ENCODE measurements at regions of chr1 and their contacts with region 1.

Region 1: GRCh38 chr1:204323887-204324286 is 35.8 kb downstream of the PLEKHA6 start:
- DNase-seq: no peak
- H3K4me3 ChIP-seq: no peak overlapping the region
- H3K27ac ChIP-seq: no peak overlapping the region
- H3K4me1 ChIP-seq: peaks cover 5% of the 10 kb centered on the region
- H3K27me3 ChIP-seq: no peaks in the 10 kb centered on the region
- CTCF ChIP-seq: no peak
- POLR2A ChIP-seq: no peak

Region 2: DNA sequence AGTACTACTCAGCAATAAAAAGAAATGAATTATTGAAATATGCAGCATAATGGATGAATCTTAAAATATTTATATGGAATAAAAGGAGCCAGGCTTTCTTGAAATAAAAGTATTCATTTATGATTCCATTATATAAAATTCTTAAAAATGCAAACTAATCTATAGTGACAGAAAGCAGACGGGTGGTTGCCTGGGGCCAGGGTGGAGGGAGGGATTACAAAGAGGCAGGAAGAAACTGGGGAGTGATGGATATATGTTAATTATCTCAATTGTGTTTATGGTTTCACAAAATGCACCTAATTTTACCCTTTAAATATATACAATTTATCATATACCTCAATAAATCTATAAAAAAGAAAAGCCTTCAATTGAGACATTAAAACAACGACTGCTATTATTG is 32.3 kb before region 1 on chr1:
- CTCF ChIA-PET with region 1: no interaction called
- POLR2A ChIA-PET with region 1: no interaction called
- dilution Hi-C with region 1: no loop called
- intact Hi-C with region 1: loop called (anchors 1 kb)
- DNase-seq: no peak
- H3K4me3 ChIP-seq: no peak overlapping the region
- H3K27ac ChIP-seq: no peak overlapping the region
- H3K4me1 ChIP-seq: peaks cover 5% of the 10 kb centered on the region
- H3K27me3 ChIP-seq: no peaks in the 10 kb centered on the region
- CTCF ChIP-seq: no peak
- POLR2A ChIP-seq: no peak

Region 3: DNA sequence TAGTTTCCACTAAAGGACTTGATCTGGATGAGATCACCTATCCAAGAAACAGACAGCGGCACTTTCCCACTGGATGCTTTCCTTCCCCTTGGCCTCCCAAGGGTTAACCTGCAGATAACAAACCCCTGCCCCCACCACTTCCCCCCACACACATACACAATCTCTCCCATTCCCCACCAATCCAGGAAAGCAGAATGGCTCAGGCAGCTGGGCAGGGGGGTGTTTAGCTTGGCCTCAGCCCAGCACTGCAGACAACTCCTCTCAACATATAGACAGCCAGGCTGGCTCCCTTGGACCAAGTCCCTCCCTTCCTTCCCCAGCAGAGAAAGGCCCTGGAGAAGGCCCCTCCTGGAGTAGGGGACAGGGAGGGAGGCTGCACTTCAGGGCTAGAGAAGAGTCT is 11.2 kb after region 1 on chr1:
- CTCF ChIA-PET with region 1: interaction called, 12 read pairs
- POLR2A ChIA-PET with region 1: interaction called, 3 read pairs
- dilution Hi-C with region 1: no loop called
- intact Hi-C with region 1: no loop called
- DNase-seq: peak; percentile 81
- H3K4me3 ChIP-seq: no peak overlapping the region
- H3K27ac ChIP-seq: no peak overlapping the region
- H3K4me1 ChIP-seq: peaks cover 20% of the 10 kb centered on the region
- H3K27me3 ChIP-seq: no peaks in the 10 kb centered on the region
- CTCF ChIP-seq: no peak
- POLR2A ChIP-seq: no peak